MCF 10A (cell line): ENCODE measurements at regions of chr19 and their contacts with region 1.

Region 1: DNA sequence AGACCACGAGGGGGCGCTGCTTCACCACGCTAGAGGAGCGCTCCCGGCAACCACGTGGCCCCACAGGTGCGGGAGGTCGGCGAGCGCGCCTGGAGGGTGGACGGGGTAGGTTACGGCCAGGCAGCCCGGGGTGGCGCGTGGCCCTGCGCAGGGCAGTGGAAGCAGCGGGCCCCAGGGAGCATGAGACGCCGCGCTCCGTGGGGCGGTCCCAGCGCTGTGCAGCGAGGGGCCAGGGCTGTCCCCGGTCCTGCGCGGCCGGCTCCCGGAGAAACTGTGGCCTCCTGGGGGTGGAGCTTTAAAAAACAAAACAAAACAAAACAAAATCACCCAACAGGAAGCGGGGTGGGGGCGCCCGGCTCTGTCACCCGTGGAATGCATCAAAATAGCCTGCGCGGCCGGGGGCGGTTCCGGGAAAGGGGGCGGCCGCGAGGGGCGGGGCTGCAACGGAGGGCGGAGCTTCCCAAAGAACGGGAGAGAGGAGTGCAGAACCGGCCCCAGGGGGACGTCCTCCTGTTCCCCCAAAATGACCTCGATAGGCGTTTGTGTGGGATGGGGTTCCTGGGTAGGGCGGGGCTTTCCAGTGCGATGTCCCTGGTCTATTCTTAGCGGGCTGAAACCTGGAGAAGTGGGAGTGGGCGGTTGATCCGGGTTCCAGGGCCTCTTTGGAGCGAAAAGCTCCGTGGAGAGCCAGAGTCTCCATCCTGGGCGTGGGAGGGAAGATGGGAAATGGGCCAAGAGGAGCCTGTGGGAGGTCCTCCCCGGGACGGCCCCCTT is 27.3 kb downstream of the NUMBL start:
- DNase-seq: peak; percentile 83
- H3K4me3 Mint-ChIP-seq: peak overlapping the region; percentile 77
- H3K27ac Mint-ChIP-seq: peak overlapping the region; percentile 57
- H3K4me1 Mint-ChIP-seq: peaks cover 14% of the 10 kb centered on the region
- H3K27me3 Mint-ChIP-seq: no peaks in the 10 kb centered on the region
- CTCF ChIP-seq: peak; percentile 96

Region 2: GRCh38 chr19:40721936-40722661 is 59.0 kb after region 1 on chr19:
- CTCF ChIA-PET with region 1: interaction called, 6 read pairs
- POLR2A ChIA-PET with region 1: interaction called, 17 read pairs
- intact Hi-C with region 1: loop called (anchors 1 kb)
- DNase-seq: peak; percentile 57
- H3K4me3 Mint-ChIP-seq: peak overlapping the region; percentile 92
- H3K27ac Mint-ChIP-seq: peak overlapping the region; percentile 95
- H3K4me1 Mint-ChIP-seq: peaks cover 33% of the 10 kb centered on the region
- H3K27me3 Mint-ChIP-seq: no peaks in the 10 kb centered on the region
- CTCF ChIP-seq: no peak

Region 3: DNA sequence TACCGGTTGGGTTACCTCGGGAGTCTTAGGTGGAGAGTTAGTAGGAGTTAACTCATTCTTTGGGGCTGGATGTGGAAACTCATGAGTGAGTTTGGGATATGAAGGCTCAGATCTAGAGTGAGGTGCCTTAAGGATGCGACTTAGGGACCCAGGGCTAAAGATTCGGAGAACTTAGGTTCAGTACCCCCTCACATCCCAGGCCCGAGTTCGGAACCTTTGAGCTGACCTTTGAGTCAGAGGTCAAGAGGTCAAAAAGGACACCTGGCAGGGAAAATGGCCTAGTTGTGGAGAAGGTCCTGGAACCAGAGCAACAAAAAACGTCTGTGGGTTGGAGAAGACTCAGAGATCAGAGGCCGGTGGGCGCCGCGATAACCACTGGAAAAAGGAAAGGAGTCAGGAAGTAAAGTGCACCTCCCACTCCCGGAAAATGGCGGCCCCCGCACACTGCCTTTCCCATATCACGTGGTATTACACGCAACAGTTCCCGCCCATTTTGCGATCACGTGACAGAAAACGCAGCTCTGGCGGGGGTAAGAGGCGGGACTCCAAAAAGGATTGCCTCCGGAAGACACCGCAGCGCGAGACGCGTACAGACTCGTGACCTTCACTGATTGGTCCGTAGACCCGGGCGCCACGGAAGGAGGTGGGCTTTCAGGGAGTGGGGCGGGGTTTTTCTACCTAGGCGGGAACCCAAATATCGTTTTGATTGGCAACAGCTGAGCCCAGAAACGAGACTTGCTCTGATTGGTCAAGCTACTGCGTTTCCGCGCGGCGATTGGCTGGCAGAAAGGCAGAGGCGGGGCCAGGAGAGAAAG is 87.2 kb after region 1 on chr19 and contains the start of gene ACTMAP:
- CTCF ChIA-PET with region 1: interaction called, 5 read pairs
- POLR2A ChIA-PET with region 1: interaction called, 10 read pairs
- intact Hi-C with region 1: loop called (anchors 2 kb)
- DNase-seq: peak; percentile 100
- H3K4me3 Mint-ChIP-seq: peak within 1 kb of the TSS; percentile 92
- H3K27ac Mint-ChIP-seq: peak within 1 kb of the TSS; percentile 91
- H3K4me1 Mint-ChIP-seq: peaks cover 31% of the 10 kb centered on the region
- H3K27me3 Mint-ChIP-seq: no peaks in the 10 kb centered on the region
- CTCF ChIP-seq: no peak
- total RNA-seq, gene ACTMAP: 19.3 and 21.2 TPM in 2 replicates

Region 4: DNA sequence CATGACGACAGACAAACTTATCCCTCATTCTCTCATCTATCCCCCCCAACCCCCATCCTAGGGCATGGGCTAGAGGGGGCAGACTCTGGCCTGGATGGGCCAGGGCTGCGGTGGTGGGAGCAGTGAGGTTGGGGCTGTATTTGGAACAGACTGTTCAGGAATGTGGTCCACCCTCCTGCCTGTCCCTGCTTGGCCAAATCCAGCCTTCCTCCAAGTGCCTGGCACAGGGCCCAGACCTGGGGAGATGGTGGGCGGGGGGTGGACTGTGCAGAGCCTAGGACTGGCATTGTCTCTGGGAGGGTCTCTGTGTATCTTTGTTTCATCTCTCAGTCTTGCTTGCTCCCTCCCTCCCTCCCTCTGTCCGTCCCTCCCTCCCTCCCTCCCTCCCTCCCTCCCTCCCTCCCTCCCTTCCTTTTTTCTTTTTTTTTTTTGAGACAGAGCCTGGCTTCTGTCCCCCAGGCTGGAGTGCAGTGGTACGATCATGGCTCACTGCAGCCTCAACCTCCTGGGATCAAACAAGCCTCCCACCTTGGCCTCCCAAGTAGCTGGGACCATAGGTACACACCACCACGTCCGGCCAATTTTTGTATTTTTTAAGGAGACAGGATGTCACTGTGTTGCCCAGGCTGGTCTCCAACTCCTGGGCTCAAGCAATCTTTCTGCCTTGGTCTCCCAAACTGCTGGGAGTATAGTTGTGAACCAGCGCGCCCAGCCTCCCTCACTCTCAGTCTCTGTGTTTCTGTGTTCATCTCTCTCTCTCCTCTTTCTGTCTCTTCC is 150.3 kb after region 1 on chr19:
- CTCF ChIA-PET with region 1: interaction called, 15 read pairs
- POLR2A ChIA-PET with region 1: interaction called, 3 read pairs
- intact Hi-C with region 1: no loop called
- DNase-seq: no peak
- H3K4me3 Mint-ChIP-seq: no peak overlapping the region
- H3K27ac Mint-ChIP-seq: peak overlapping the region; percentile 29
- H3K4me1 Mint-ChIP-seq: peaks cover 30% of the 10 kb centered on the region
- H3K27me3 Mint-ChIP-seq: peaks cover 33% of the 10 kb centered on the region
- CTCF ChIP-seq: no peak

Region 5: GRCh38 chr19:40822161-40822560 is 159.1 kb after region 1 on chr19:
- CTCF ChIA-PET with region 1: interaction called, 17 read pairs
- POLR2A ChIA-PET with region 1: interaction called, 4 read pairs
- intact Hi-C with region 1: loop called (anchors 1 kb)
- DNase-seq: no peak
- H3K4me3 Mint-ChIP-seq: no peak overlapping the region
- H3K27ac Mint-ChIP-seq: no peak overlapping the region
- H3K4me1 Mint-ChIP-seq: peaks cover 14% of the 10 kb centered on the region
- H3K27me3 Mint-ChIP-seq: no peaks in the 10 kb centered on the region
- CTCF ChIP-seq: no peak

Region 6: DNA sequence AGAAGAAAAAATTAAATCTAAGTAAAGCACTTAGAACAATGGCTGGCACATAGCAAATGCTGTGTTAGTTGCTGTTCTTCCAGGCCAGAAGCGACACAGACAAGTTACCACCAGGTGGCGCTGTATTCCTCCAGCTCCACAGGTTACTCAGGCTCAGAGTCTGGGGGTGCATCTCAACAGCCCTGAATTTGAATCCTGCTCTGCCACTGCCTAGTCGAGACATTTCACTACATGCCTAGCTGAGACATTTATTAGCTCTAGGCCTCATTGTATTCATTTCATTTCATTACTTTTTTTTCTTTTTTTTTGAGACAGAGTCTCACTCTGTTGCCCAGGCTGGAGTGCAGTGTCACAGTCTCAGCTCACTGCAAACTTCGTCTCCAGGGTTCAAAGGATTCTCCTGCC is 311.5 kb after region 1 on chr19:
- CTCF ChIA-PET with region 1: interaction called, 4 read pairs
- POLR2A ChIA-PET with region 1: no interaction called
- intact Hi-C with region 1: loop called (anchors 10 kb)
- DNase-seq: peak; percentile 78
- H3K4me3 Mint-ChIP-seq: no peak overlapping the region
- H3K27ac Mint-ChIP-seq: no peak overlapping the region
- H3K4me1 Mint-ChIP-seq: no peaks in the 10 kb centered on the region
- H3K27me3 Mint-ChIP-seq: peaks cover 74% of the 10 kb centered on the region
- CTCF ChIP-seq: peak; percentile 84

Region 7: GRCh38 chr19:41144403-41144802 is 481.3 kb after region 1 on chr19:
- CTCF ChIA-PET with region 1: interaction called, 12 read pairs
- POLR2A ChIA-PET with region 1: no interaction called
- intact Hi-C with region 1: loop called (anchors 1 kb)
- DNase-seq: peak; percentile 84
- H3K4me3 Mint-ChIP-seq: no peak overlapping the region
- H3K27ac Mint-ChIP-seq: no peak overlapping the region
- H3K4me1 Mint-ChIP-seq: no peaks in the 10 kb centered on the region
- H3K27me3 Mint-ChIP-seq: peaks cover 36% of the 10 kb centered on the region
- CTCF ChIP-seq: peak; percentile 79